ENCODE measurements at regions of chr2 and their contacts with region 1.

Region 1: DNA sequence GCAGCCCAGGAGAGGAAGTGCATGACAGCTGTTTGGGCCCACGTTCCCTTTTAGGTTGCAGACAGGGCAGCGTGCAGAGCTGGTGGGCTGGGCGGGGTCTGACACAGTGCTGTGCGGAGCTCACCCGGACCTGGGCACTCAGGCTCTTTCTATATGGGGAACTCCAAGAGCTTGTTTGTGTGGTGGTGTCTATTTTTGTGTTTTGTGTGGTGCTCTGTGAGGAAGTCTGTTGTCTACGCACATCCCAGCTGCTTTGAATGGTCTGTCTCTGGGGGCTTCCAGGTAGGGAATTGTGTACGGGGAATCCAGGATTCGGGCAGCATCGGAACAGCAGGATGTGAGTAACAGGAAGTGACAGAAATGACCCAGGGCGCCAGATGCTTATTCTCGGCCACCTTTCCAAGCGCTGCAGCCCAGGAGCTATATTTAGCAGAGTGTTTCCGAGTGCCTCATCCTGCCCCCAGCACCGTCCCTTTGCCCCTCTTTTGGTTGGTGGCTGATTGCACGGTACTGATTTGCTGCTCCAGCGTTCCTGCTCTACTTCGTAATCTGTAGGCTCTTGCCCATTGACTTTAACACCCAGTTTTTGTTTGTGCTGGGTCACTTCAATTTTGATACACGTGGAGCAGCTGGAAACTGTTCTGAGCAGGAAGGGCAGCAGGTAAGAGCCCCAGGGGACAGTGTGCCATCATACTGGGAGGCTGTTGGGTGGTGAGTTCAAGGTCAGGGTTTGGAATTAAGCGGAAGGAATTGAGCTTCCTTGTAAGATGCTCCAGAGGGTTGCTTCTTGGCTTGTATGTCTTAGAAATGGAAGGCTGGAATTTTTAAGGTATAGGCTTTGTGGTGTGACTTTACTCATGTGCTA is 64.7 kb downstream of the DGKD start:
- DNase-seq: peak; percentile 58
- H3K4me3 Mint-ChIP-seq: peak overlapping the region; percentile 76
- H3K27ac Mint-ChIP-seq: peak overlapping the region; percentile 93
- H3K4me1 Mint-ChIP-seq: peaks cover 98% of the 10 kb centered on the region
- H3K27me3 Mint-ChIP-seq: no peaks in the 10 kb centered on the region

Region 2: DNA sequence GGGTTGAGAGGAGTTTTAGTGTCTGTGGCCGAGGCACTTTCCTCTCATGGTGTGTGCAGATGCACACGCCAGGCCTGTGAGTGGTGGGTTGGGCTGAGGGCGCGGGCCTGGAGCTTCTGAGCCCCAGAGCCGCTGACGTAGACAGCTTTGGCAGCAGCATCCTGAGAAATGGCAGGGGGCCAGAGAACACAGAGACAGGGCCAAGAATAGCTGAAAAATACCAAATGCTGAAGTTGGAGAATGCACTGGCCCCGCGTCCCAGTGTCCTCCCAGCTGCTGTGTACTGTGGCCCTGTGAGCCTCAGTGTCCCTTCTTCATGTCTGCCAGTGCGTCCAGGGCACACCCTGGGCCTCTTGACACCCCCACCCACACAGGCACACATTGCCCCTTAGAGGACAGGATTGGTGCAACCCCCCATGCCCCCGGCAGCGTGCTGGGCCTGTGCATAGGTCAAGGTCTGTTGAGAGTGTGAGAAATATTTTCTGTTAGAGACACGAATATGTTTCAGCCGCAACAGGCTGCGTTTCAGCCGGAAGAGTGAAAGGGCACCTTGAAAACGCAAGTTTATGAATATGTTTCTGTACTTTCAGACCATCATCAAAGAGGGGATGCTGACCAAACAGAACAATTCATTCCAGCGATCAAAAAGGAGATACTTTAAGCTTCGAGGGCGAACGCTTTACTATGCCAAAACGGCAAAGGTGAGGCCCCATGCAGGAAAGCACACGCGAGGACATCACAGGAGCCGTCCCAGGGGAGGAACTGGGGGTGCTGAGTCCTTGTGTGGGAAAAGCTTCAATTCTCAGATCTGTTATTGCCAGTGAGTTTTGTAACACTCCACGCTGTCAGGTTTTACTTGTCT is 31.1 kb before region 1 on chr2:
- CTCF ChIA-PET with region 1: interaction called, 10 read pairs
- POLR2A ChIA-PET with region 1: no interaction called
- DNase-seq: no peak
- H3K4me3 Mint-ChIP-seq: no peak overlapping the region
- H3K27ac Mint-ChIP-seq: no peak overlapping the region
- H3K4me1 Mint-ChIP-seq: peaks cover 63% of the 10 kb centered on the region
- H3K27me3 Mint-ChIP-seq: no peaks in the 10 kb centered on the region

Region 3: GRCh38 chr2:233404222-233404621 is 14.8 kb before region 1 on chr2:
- CTCF ChIA-PET with region 1: interaction called, 32 read pairs
- POLR2A ChIA-PET with region 1: no interaction called
- DNase-seq: peak; percentile 83
- H3K4me3 Mint-ChIP-seq: no peak overlapping the region
- H3K27ac Mint-ChIP-seq: peak overlapping the region; percentile 79
- H3K4me1 Mint-ChIP-seq: peaks cover 63% of the 10 kb centered on the region
- H3K27me3 Mint-ChIP-seq: no peaks in the 10 kb centered on the region

Region 4: GRCh38 chr2:233531888-233532458 is 113.0 kb after region 1 on chr2:
- CTCF ChIA-PET with region 1: no interaction called
- POLR2A ChIA-PET with region 1: no interaction called
- DNase-seq: no peak
- H3K4me3 Mint-ChIP-seq: no peak overlapping the region
- H3K27ac Mint-ChIP-seq: no peak overlapping the region
- H3K4me1 Mint-ChIP-seq: no peaks in the 10 kb centered on the region
- H3K27me3 Mint-ChIP-seq: no peaks in the 10 kb centered on the region